ENCODE measurements at regions of chrX and their contacts with region 1.

Region 1: DNA sequence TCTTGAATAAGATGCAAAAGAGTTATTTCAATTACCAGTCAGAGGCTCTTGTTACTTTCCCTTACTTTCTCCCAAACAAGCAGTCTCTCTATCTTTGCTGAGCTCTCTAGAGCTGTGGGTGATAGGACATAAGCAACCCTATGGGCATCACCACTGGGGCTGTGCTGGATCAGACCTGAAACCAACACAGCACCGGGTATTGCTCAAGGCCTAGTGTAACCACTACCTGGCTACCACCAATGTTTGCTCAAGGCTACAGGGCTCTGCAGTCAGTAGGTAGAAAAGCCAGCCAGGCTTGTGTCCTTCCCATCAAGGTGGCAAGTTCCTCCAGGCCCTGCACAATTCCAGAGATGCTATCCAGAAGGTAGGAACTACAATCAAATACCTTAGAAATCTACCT is 35.3 kb upstream of the AGTR2 start:
- DNase-seq: no peak
- ATAC-seq: no peak

Region 2: DNA sequence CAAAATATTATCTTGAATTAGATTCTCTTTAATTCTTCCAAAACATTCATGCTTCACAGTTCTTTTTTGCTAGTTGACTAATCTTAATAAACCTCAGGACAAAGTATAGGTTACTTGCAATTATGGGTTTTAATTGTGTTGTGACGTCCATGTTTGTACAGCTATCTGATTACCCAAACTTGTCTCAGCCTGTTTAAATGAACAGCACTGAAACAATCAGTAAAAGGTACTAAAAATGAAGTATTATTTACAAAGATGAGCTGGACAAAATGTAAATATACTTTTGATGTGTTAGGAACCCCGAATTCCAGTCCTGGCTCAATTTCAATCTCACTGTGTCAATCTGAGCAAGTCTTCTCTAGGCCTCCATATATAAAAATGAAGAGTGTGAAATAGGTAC is 243.7 kb after region 1 on chrX:
- intact Hi-C with region 1: no loop called
- DNase-seq: no peak
- ATAC-seq: no peak

Region 3: DNA sequence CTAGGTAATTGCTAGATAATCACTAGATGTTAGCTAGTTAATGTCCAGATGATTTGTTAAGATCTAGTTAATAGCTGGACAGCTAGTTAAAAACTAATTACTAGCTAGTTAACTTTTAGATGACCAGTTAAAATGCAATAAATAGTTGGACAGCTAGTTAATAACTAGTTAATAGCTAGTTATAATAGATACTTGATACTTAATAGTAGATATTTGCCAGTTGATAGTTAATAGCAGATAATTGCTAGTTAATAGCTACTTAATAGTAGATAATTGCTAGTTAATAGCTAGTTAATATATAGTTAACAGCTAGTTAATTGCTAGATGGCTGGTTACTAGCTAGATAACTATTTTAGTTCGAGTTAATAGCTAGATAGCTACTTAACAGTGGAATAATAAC is 958.9 kb after region 1 on chrX:
- intact Hi-C with region 1: loop called in 1 of 2 experiments (anchors 5 kb)
- DNase-seq: no peak
- ATAC-seq: no peak